Sigmoid colon (tissue), 7 donors: ENCODE measurements at regions of chr6 and their contacts with region 1.

Region 1: GRCh38 chr6:35583893-35584688 is 71.4 kb upstream of the TULP1 start:
- DNase-seq: peak; percentile 89
- H3K4me3 ChIP-seq: no peak overlapping the region
- H3K27ac ChIP-seq: peak overlapping the region; percentile 44 to 94 (median 77)
- H3K4me1 ChIP-seq: peaks cover 0 to 57% (median 43%) of the 10 kb centered on the region in 4 donors
- H3K27me3 ChIP-seq: no peaks in the 10 kb centered on the region
- CTCF ChIP-seq: peak; percentile 75 to 86 (median 77)
- EP300 ChIP-seq: no peak
- POLR2A ChIP-seq: no peak

Region 2: GRCh38 chr6:35522660-35523658 is 61.1 kb before region 1 on chr6:
- intact Hi-C with region 1: loop called (anchors 2 kb)
- DNase-seq: peak; percentile 88
- H3K4me3 ChIP-seq: peak overlapping the region in 1 of 4 donors; percentile 26
- H3K27ac ChIP-seq: no peak overlapping the region
- H3K4me1 ChIP-seq: peaks cover 0 to 9% (median 2%) of the 10 kb centered on the region in 4 donors
- H3K27me3 ChIP-seq: no peaks in the 10 kb centered on the region
- CTCF ChIP-seq: peak; percentile 89 to 100 (median 96)
- EP300 ChIP-seq: no peak
- POLR2A ChIP-seq: no peak

Region 3: GRCh38 chr6:35601331-35602132 is 17.4 kb after region 1 on chr6:
- intact Hi-C with region 1: loop called (anchors 2 kb)
- DNase-seq: peak; percentile 92
- H3K4me3 ChIP-seq: peak overlapping the region in 3 of 4 donors; percentile 21 to 31 (median 21)
- H3K27ac ChIP-seq: peak overlapping the region; percentile 88 to 98 (median 91)
- H3K4me1 ChIP-seq: peaks cover 0 to 82% (median 75%) of the 10 kb centered on the region in 4 donors
- H3K27me3 ChIP-seq: no peaks in the 10 kb centered on the region
- CTCF ChIP-seq: no peak
- EP300 ChIP-seq: peak; percentile 100
- POLR2A ChIP-seq: no peak

Region 4: GRCh38 chr6:35624341-35625070 is 40.4 kb after region 1 on chr6:
- intact Hi-C with region 1: loop called (anchors 5 kb)
- DNase-seq: no peak
- H3K4me3 ChIP-seq: no peak overlapping the region
- H3K27ac ChIP-seq: peak overlapping the region in 2 of 4 donors; percentile 7 to 42
- H3K4me1 ChIP-seq: peaks cover 0 to 6% (median 0%) of the 10 kb centered on the region in 4 donors
- H3K27me3 ChIP-seq: no peaks in the 10 kb centered on the region
- CTCF ChIP-seq: no peak
- EP300 ChIP-seq: no peak
- POLR2A ChIP-seq: no peak

Region 5: DNA sequence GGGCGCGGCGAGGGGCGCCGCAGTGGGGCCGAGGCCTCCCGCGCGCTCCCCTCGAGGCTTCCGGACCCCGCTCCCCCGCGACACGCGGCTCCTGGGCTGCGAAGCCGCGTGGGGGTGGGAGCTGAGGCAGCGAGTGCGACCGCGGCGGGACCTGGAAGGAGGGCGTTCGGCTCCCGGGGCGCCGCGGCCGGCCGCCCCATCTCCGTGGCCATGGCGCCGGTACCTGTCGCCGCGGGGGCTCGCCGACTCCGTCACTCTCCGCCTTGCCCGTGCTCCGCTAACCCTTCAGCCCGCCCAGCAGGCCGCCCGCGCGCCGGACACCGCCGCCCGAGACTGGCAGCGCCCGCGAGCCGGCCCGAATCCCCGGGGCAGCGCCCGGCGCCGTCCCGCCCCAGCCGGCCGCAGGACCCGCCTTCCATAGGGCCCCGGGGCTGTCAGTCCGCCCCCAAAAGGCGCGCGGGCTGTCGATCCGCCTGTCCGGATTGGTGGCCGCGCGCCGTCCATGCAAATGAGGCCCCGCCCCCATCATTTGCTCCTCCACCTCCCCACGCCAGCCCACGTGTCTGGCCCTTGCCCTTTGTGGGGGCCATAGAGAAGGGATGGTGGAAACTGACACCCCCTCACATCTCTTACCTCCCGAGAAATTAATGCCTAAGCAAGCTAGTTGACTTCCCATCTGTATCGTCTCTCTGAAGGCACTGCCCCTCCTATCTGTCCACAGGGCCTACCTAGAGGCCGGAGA is 104.7 kb after region 1 on chr6 and contains the start of gene FKBP5:
- intact Hi-C with region 1: loop called (anchors 5 kb)
- DNase-seq: peak; percentile 99
- H3K4me3 ChIP-seq: peak within 1 kb of the TSS; percentile 75 to 100 (median 90)
- H3K27ac ChIP-seq: peak within 1 kb of the TSS; percentile 97 to 100 (median 98)
- H3K4me1 ChIP-seq: peaks cover 0 to 51% (median 43%) of the 10 kb centered on the region in 4 donors
- H3K27me3 ChIP-seq: no peaks in the 10 kb centered on the region
- CTCF ChIP-seq: no peak
- EP300 ChIP-seq: no peak
- POLR2A ChIP-seq: peak in 1 of 2 donors; percentile 62
- total RNA-seq, gene FKBP5: 200 to 326 (median 258) TPM

Region 6: DNA sequence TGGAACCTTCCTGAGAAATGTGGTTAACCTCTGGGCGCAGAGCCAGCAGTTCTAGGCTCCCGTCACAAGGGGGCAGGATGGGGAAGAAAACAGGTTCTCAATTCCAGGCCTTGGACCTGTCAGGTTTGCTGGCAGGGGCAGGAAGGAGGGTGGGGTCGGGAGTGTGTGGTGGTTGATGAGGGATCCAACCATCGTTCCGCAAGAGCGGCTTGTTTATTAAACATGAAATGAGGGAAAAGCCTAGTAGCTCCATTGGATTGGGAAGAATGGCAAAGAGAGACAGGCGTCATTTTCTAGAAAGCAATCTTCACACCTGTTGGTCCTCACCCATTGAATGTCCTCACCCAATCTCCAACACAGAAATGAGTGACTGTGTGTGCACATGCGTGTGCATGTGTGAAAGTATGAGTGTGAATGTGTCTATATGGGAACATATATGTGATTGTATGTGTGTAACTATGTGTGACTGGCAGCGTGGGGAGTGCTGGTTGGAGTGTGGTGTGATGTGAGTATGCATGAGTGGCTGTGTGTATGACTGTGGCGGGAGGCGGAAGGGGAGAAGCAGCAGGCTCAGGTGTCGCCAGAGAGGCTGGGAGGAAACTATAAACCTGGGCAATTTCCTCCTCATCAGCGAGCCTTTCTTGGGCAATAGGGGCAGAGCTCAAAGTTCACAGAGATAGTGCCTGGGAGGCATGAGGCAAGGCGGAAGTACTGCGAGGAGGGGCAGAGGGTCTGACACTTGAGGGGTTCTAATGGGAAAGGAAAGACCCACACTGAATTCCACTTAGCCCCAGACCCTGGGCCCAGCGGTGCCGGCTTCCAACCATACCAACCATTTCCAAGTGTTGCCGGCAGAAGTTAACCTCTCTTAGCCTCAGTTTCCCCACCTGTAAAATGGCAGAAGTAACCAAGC is 1039.7 kb after region 1 on chr6:
- intact Hi-C with region 1: no loop called
- DNase-seq: peak; percentile 95
- H3K4me3 ChIP-seq: no peak overlapping the region
- H3K27ac ChIP-seq: peak overlapping the region in 1 of 4 donors; percentile 49
- H3K4me1 ChIP-seq: peaks cover 0 to 35% (median 28%) of the 10 kb centered on the region in 4 donors
- H3K27me3 ChIP-seq: no peaks in the 10 kb centered on the region
- CTCF ChIP-seq: peak; percentile 84 to 96 (median 90)
- EP300 ChIP-seq: no peak
- POLR2A ChIP-seq: peak in 1 of 2 donors; percentile 29